Transverse colon (tissue), 4 donors: ENCODE measurements at regions of chr2 and their contacts with region 1.

Region 1: DNA sequence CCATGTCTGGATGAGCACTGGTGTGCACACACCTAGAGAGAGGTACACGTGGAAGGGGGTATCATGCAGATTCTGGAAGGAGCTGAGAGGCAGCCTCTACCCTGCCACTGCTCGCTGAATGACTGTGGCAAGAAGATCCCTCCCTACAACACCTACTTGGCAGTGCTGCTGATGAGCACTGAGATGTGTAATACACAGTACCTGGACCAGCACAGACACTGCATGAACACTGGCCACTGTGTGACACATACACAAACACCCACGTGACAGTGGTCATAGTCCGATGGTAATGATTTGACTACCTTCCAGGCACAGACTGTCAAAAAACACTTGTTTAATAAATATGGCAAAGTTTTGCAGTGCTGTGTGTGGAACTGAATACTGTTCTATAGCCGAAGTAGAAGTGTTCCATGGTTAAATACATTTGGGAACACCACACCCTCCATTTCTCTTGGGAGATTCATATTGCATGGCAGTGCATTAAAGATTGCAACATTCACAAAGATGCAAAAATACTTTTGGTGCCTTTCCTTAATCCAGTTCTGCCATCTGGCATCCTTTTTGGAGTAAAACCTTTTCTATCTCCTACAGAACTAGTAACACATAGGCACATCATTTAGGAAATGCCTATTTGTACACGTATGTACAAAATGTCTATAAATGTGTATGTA is 29.6 kb downstream of the MRPS5 start:
- DNase-seq: no peak
- H3K4me3 ChIP-seq: no peak overlapping the region
- H3K27ac ChIP-seq: no peak overlapping the region
- H3K4me1 ChIP-seq: no peaks in the 10 kb centered on the region
- H3K27me3 ChIP-seq: no peaks in the 10 kb centered on the region
- CTCF ChIP-seq: no peak
- EP300 ChIP-seq: no peak
- POLR2A ChIP-seq: no peak

Region 2: DNA sequence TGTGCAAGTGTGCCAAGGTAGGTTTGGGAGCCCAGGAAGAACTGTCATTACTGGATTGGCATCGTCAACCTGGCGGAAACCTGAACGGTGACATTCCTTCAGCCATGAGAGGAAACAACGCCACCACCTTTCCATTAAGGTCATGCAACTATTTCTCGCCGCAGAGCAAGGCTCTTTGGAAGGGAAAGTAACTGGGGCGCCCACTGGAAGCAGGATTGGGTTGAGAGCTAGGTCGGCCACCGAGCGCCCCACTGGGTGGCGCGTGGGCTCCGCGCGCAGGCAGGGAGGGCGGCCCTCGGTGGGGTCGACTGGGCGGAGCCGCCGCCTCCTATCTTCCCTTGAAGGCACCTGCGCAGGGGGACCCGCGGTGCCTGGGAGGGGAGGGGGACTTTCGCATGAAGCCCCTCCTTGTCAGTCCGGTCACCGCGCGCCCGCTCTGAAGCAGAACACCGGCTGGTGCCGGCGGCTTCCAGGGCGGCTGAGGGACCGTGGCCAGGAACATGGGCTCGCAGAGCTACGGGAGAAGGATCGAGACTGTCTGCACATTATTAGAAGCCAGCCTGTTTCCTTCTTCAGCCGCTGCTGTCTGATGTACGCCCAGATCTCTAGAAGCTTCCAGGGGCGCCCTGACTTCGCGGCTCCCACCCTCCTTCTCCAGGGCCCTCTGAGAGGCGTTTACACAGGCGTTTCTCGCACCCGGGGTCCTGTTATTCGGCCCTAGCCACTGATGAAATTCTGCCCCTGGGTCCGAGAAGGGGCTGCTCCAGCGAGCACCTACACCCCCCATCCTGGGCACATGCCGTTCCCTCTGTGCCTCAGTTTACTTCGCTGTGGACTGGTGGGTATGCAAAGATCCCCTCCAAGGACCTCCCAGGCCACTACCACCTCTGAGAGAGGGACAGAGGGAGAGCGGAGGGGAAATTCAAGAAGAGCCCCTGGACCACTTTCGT is 93.8 kb before region 1 on chr2:
- in situ Hi-C with region 1: no loop called
- intact Hi-C with region 1: no loop called
- DNase-seq: no peak
- H3K4me3 ChIP-seq: no peak overlapping the region
- H3K27ac ChIP-seq: no peak overlapping the region
- H3K4me1 ChIP-seq: no peaks in the 10 kb centered on the region
- H3K27me3 ChIP-seq: peaks cover 21% of the 10 kb centered on the region
- CTCF ChIP-seq: no peak
- EP300 ChIP-seq: no peak
- POLR2A ChIP-seq: no peak

Region 3: DNA sequence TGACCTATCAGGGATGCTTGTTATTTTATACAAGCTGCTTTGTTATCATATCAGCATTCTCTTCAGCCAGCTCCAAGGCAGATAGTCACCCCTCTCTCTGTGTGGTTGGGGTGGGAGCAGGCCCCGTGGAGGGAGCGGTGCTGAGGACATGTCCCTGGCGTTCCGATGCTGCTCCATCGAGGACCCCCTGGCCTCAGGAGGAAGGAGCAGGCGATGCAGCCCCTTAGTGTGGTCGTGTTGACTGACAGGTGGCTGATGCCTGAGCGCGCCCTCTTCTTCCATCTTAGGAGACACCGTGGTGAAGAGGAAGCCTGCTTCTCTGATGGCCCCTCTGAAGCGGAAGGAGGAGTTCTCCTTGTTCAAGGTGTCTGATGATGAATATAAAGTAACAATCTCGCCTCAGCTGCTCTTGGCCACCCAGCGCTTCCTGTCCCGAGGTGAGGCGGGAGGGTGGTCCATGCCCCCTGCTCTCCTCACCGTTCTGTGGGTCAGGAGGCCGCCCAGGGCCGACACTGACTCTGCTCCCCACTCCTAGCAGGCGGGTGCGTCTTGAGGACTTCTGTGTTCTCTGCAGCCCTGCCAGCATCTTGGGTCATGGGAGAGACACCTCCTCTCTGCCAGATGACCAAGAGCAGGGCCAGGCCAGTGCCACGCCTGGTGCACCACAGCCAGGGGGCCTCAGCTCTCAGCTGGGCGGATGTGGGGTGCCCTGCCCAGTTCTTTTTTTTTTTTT is 1734.7 kb after region 1 on chr2:
- in situ Hi-C with region 1: no loop called
- intact Hi-C with region 1: loop called (anchors 5 kb)
- DNase-seq: no peak
- H3K4me3 ChIP-seq: no peak overlapping the region
- H3K27ac ChIP-seq: no peak overlapping the region
- H3K4me1 ChIP-seq: peaks cover 0 to 29% (median 12%) of the 10 kb centered on the region in 4 donors
- H3K27me3 ChIP-seq: no peaks in the 10 kb centered on the region
- CTCF ChIP-seq: no peak
- EP300 ChIP-seq: no peak
- POLR2A ChIP-seq: no peak